Dorsolateral prefrontal cortex (tissue), 120 donors: ENCODE measurements at regions of chr1 and their contacts with region 1.

Region 1: GRCh38 chr1:168342572-168343280 is 62.0 kb downstream of the TBX19 start:
- DNase-seq: peak; percentile 81 to 96 (median 92)
- H3K4me3 ChIP-seq: peak overlapping the region in 50 of 59 donors; percentile 5 to 60 (median 39)
- H3K27ac ChIP-seq: peak overlapping the region in 58 of 59 donors; percentile 2 to 90 (median 78)
- H3K27me3 ChIP-seq: no peaks in the 10 kb centered on the region
- CTCF ChIP-seq: peak; percentile 75 to 95 (median 90)

Region 2: GRCh38 chr1:168082008-168082876 is 260.5 kb before region 1 on chr1:
- intact Hi-C with region 1: loop called in 1 of 2 experiments (anchors 10 kb)
- DNase-seq: peak; percentile 55 to 84 (median 77)
- H3K4me3 ChIP-seq: no peak overlapping the region
- H3K27ac ChIP-seq: peak overlapping the region in 45 of 59 donors; percentile 2 to 83 (median 44)
- H3K27me3 ChIP-seq: no peaks in the 10 kb centered on the region
- CTCF ChIP-seq: peak; percentile 57 to 91 (median 83)

Region 3: DNA sequence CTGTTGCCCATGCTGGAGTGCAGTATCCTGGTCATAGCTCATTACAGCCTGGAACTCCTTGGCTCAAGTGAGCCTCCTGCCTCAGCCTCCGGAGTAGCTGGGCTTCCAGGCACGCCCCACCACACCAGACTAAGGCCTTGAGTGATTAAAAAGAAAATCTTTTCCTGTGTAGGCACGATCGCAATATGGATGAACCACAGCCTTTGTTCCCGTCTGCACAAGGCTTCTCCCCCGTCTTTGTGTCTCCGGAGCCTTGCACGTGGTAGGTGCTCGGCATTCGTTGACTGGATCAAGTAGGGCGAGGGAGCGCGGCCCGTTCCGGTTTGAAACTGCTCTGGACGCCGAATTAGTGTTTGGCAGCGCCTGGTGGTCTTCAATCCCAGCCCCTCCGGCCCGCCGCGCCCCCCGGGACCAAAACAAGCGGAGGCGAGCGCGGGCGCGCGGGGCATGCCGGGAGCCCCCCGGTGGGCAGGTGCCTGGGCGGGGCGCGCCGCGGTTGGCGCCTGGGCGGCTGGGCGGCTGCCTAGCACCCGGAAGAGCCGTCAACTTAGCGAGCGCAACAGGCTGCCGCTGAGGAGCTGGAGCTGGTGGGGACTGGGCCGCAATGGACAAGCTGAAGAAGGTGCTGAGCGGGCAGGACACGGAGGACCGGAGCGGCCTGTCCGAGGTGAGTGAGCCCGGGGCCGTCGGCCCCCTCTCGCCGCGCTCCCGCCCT is 117.1 kb before region 1 on chr1 and contains the start of gene SFT2D2:
- intact Hi-C with region 1: loop called in 1 of 2 experiments (anchors 5 kb)
- DNase-seq: peak; percentile 10 to 84 (median 57)
- H3K4me3 ChIP-seq: peak within 1 kb of the TSS; percentile 50 to 97 (median 88)
- H3K27ac ChIP-seq: peak within 1 kb of the TSS; percentile 8 to 92 (median 78)
- H3K27me3 ChIP-seq: peaks cover 0 to 3% (median 0%) of the 10 kb centered on the region in 45 donors
- CTCF ChIP-seq: peak in 13 of 56 donors; percentile 9 to 49 (median 28)
- total RNA-seq, gene SFT2D2: 15.0 to 59.6 (median 26.0) TPM

Region 4: GRCh38 chr1:168301664-168302334 is 40.9 kb before region 1 on chr1:
- intact Hi-C with region 1: no loop called
- DNase-seq: no peak
- H3K4me3 ChIP-seq: no peak overlapping the region
- H3K27ac ChIP-seq: no peak overlapping the region
- H3K27me3 ChIP-seq: no peaks in the 10 kb centered on the region
- CTCF ChIP-seq: no peak

Region 5: GRCh38 chr1:168397806-168398205 is 55.1 kb after region 1 on chr1:
- intact Hi-C with region 1: loop called in 1 of 2 experiments (anchors 2 kb)
- DNase-seq: no peak
- H3K4me3 ChIP-seq: no peak overlapping the region
- H3K27ac ChIP-seq: peak overlapping the region in 31 of 59 donors; percentile 20 to 96 (median 88)
- H3K27me3 ChIP-seq: no peaks in the 10 kb centered on the region
- CTCF ChIP-seq: no peak

Region 6: GRCh38 chr1:168603501-168604110 is 260.9 kb after region 1 on chr1:
- intact Hi-C with region 1: loop called in 1 of 2 experiments (anchors 10 kb)
- DNase-seq: peak; percentile 66 to 89 (median 80)
- H3K4me3 ChIP-seq: no peak overlapping the region
- H3K27ac ChIP-seq: peak overlapping the region in 3 of 59 donors; percentile 2 to 13 (median 9)
- H3K27me3 ChIP-seq: no peaks in the 10 kb centered on the region
- CTCF ChIP-seq: peak; percentile 25 to 93 (median 85)